Activated CD4-positive, alpha-beta T cell treated with anti-CD3 and anti-CD28 coated beads for 36 hours (primary cell): ENCODE measurements at regions of chr17 and their contacts with region 1.

Region 1: DNA sequence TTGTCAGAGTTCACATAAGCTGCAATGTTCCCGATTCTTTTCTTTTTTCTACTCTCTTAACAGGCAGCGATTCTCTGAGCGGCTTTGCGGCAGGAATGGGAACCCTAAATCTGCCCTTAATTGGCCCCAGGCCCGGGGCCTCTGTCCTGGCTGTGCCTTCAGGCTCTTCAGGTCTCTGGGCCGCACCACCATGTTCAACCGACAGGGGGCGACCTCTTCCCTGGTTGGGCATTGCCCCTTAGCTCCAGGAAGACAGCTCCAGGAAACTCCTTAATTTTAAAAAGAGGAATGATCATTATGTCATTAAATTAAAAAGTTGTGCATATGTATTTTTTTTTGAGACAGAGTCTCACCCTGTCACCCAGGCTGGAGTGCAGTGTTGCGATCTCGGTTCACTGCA is 20.3 kb downstream of the CACNG5 start:
- DNase-seq: peak; percentile 72
- ATAC-seq: no peak
- H3K4me3 Mint-ChIP-seq: no peak overlapping the region
- H3K27ac Mint-ChIP-seq: no peak overlapping the region
- H3K4me1 Mint-ChIP-seq: no peaks in the 10 kb centered on the region
- H3K27me3 Mint-ChIP-seq: no peaks in the 10 kb centered on the region

Region 2: DNA sequence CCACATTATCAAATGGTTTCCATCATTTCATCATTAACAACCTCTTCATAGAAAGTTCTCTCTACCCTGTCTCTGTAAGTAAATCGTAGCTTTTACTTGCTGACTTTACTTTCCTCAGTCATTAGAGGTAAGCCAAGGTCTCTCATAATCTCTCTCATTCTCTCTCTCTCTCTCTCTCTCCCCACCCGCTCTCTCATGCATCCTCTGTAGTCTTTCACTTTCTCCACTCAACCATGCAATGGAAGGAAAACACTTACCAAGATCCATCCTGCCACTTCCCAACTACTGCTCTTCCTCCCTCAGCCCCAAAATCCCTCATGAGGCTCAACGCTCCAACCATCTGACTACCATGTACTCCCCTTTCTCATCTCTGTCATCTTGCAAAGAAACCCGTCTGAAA is 669.3 kb before region 1 on chr17:
- CTCF ChIA-PET with region 1: no interaction called
- POLR2A ChIA-PET with region 1: no interaction called
- intact Hi-C with region 1: no loop called
- DNase-seq: no peak
- ATAC-seq: no peak
- H3K4me3 Mint-ChIP-seq: no peak overlapping the region
- H3K27ac Mint-ChIP-seq: no peak overlapping the region
- H3K4me1 Mint-ChIP-seq: peaks cover 1% of the 10 kb centered on the region
- H3K27me3 Mint-ChIP-seq: no peaks in the 10 kb centered on the region

Region 3: DNA sequence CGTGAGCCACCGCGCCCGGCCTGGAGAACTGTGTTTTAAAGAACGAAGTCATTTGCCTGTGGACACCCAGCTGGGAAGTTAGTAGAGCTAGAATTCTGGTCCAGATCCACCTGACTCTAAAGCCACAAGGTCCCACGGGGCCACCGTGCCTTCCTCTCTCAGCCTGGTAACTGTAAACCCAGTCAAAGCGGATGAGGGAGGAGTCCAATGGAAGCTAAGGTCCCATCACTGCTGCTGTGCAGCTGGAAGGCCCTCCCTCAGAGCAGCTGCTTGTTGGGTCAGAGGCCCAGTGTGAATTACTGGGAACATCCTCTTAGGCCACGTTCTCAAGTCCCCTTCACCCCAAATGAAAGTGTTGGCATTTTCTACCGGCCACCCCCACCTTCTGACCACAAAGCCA is 69.1 kb before region 1 on chr17:
- CTCF ChIA-PET with region 1: interaction called, 3 read pairs
- POLR2A ChIA-PET with region 1: no interaction called
- intact Hi-C with region 1: loop called in 1 of 2 experiments (anchors 2 kb)
- DNase-seq: no peak
- ATAC-seq: no peak
- H3K4me3 Mint-ChIP-seq: no peak overlapping the region
- H3K27ac Mint-ChIP-seq: no peak overlapping the region
- H3K4me1 Mint-ChIP-seq: peaks cover under 1% of the 10 kb centered on the region
- H3K27me3 Mint-ChIP-seq: no peaks in the 10 kb centered on the region

Region 4: DNA sequence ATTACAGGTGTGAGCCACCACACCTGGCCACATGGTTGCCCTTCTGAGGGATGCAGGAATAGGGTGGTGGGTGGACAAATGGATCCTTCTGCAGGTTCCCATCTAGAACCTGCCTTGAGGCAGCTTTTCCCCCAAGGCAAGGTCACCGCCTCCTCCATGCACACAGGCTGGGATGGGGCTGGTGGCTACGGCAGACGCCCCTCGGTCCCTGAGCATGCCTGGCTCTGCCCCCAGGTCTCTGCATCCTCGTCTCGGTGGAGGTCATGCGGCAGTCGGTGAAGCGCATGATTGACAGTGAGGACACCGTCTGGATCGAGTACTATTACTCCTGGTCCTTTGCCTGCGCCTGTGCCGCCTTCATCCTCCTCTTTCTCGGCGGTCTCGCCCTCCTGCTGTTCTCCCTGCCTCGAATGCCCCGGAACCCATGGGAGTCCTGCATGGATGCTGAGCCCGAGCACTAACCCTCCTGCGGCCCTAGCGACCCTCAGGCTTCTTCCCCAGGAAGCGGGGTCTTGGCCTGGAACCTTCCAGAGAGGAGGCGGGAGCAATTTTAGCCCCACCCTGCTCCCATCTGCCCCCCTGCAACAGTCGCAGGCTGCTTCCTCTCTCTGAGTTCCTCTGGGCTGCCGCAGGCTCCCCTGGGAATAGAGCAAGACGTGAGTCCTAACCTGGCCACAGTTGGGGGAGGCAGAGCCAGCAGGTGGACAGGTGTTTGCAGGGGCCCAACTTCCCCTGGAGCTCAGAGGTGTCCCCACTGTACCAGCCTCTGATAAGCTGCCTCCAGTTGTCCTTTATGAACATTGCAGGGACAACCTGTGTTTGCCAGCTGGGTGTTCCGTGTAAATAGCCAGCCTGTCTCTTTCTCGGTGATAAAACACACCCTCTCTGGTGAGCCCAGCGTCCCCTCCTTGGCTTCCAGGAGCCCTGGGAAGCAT is 200.9 kb after region 1 on chr17:
- CTCF ChIA-PET with region 1: no interaction called
- POLR2A ChIA-PET with region 1: no interaction called
- intact Hi-C with region 1: no loop called
- DNase-seq: no peak
- ATAC-seq: no peak
- H3K4me3 Mint-ChIP-seq: no peak overlapping the region
- H3K27ac Mint-ChIP-seq: no peak overlapping the region
- H3K4me1 Mint-ChIP-seq: no peaks in the 10 kb centered on the region
- H3K27me3 Mint-ChIP-seq: no peaks in the 10 kb centered on the region